Cardiac septum (tissue), 1 donor: ENCODE measurements at regions of chr19 and their contacts with region 1.

Region 1: DNA sequence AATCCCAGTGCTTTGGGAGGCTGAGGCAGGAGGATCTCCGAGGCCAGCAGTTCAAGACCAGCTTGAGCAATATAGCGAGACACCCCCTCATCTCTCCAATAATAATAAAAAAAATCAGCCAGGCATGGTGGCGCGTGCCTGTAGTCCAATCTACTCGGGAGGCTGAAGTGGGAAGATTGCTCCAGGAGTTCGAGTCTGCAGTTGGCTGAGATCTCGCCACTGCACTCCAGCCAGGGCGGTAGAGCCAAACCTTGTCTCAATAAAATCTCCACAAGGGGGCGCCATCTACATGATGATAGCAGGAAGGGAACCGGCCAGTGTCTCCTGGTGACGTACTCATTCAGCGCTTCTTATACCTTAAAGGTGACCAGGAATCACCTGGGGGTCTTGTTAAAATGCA is 13.6 kb upstream of the C5AR1 start:
- DNase-seq: peak; percentile 81

Region 2: GRCh38 chr19:47348819-47349795 is 53.1 kb after region 1 on chr19 and contains the start of gene DHX34:
- intact Hi-C with region 1: no loop called
- DNase-seq: peak; percentile 99
- total RNA-seq, gene DHX34: 8.5 TPM

Region 3: DNA sequence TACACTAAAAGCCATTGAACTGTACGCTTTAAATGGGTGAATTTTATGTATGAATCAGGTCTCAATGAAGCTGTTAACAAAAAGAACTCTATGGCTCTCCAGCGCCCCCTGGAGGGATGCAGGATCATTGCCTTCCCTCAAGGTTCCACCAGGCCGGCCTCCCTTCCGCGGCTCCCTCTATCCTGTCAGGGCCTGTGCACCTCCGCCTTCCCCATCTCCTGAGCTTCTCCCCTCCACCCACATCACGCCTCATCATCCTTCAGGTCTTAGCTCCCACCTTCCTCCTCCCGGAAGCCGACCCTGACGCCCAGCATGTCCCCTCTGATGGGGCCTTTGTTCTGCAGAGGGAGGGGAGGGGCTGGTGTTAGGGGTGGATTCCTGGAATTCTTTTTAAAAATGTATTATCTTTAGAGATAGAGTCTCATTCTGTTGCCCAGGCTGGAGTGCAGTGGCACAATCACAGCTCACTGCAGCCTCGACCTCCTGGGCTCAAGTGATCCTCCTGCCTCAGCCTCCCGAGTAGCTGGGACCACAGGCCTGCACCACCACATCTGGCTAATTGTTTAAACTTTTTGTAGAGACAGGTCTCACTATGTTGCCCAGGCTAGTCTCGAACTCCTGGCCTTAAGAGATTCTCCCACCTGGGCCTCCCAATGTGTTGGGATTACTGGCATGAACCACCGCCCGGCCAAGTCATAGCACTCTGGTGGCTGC is 95.6 kb after region 1 on chr19:
- intact Hi-C with region 1: loop called (anchors 5 kb)
- DNase-seq: peak; percentile 88

Region 4: GRCh38 chr19:47428177-47428894 is 132.3 kb after region 1 on chr19:
- intact Hi-C with region 1: loop called (anchors 10 kb)
- DNase-seq: peak; percentile 89